ENCODE measurements at regions of chr9 and their contacts with region 1.

Region 1: DNA sequence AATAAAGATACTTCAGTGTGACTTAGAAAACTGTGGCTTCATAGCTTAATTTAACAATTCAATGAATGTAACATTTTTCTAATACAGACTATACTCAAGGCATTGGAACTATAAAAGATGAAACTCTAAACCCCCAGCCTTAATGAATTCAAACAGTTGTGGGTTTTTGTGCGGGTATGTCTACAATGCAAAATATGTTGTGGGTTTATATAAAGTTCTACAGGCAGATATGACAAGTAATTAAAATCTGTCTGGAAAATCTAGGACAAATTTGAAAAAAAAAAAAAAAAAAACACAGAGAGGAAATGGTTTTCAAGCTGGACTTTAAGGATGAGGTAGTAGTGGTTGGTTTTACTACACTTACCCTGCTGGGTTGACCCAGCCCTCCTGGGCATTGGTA is 467.5 kb upstream of the TLE4 start:
- DNase-seq: no peak
- H3K4me3 ChIP-seq: no peak overlapping the region
- H3K27ac ChIP-seq: no peak overlapping the region
- H3K4me1 ChIP-seq: no peaks in the 10 kb centered on the region
- H3K27me3 ChIP-seq: no peaks in the 10 kb centered on the region
- CTCF ChIP-seq: no peak

Region 2: DNA sequence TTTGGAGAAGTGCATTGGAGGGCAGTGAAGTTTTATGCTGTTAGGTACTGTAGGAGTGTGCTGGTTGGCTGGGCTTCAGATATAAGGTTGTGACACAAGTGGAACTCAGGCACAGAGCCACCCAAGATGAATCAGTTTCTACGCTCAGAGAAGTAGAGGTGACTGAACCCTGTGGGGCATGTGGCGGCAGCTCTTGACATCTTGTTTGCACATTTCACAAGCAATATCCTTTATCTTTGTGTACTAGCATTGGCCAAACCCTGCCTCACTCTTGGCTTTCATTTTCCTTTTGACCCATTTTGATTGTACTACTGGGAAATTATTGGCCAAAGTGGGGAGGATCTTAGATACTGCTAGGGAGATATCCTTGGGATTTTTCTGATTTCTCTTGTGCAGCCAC is 697.3 kb before region 1 on chr9:
- CTCF ChIA-PET with region 1: no interaction called
- POLR2A ChIA-PET with region 1: no interaction called
- intact Hi-C with region 1: no loop called
- DNase-seq: no peak
- H3K4me3 ChIP-seq: no peak overlapping the region
- H3K27ac ChIP-seq: no peak overlapping the region
- H3K4me1 ChIP-seq: no peaks in the 10 kb centered on the region
- H3K27me3 ChIP-seq: no peaks in the 10 kb centered on the region
- CTCF ChIP-seq: no peak

Region 3: DNA sequence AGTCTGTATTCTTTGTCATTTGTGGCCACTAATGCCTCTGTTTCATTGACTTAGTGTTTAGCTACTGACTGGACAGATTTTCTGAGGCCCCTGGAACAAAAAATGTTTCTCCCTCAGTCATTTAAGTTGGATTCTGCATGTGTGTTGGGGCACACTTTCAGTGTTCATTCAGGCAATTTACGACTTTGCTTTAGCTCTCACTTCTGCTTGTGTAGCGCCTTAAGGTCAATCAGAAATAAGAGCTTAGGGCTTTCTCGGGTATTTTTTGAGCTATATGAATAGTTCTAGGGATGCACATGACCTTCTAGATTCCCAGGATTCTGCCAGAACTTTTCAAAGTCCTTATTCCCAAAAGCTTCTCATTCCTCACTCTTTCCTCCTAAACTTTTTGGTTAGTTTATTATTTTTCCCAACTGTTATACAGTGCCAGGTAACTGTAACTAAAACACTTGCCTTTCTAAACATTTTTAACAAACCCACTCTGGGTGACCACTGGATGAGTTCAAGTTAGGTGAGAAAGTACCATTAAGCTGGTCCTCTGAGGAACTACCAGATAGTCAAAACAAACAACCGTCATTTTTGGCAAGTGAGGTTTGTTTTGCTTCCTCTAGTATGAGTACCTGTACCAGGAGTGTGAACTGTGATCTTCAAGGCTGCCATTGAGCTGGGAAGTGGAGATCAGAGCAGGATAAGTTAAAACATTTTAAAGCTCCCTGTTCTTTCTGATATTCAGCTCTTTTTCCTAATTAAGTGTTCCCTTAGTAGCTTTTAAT is 103.8 kb before region 1 on chr9:
- CTCF ChIA-PET with region 1: no interaction called
- POLR2A ChIA-PET with region 1: no interaction called
- intact Hi-C with region 1: no loop called
- DNase-seq: no peak
- H3K4me3 ChIP-seq: no peak overlapping the region
- H3K27ac ChIP-seq: no peak overlapping the region
- H3K4me1 ChIP-seq: no peaks in the 10 kb centered on the region
- H3K27me3 ChIP-seq: no peaks in the 10 kb centered on the region
- CTCF ChIP-seq: no peak

Region 4: GRCh38 chr9:79046401-79046800 is 57.8 kb before region 1 on chr9:
- CTCF ChIA-PET with region 1: no interaction called
- POLR2A ChIA-PET with region 1: no interaction called
- intact Hi-C with region 1: loop called (anchors 10 kb)
- DNase-seq: no peak
- H3K4me3 ChIP-seq: no peak overlapping the region
- H3K27ac ChIP-seq: no peak overlapping the region
- H3K4me1 ChIP-seq: no peaks in the 10 kb centered on the region
- H3K27me3 ChIP-seq: peaks cover 33% of the 10 kb centered on the region
- CTCF ChIP-seq: no peak